Dendritic cell treated with granulocyte-macrophage colony-stimulating factor and Interleukin-4, amounts not matched to agents 40 ng/mL and 50 ng/mL, for 4 days (primary cell): ENCODE measurements at regions of chr1 and their contacts with region 1.

Region 1: GRCh38 chr1:32335790-32336590 is at the start of gene MARCKSL1:
- H3K4me3 Mint-ChIP-seq: peak within 1 kb of the TSS; percentile 73
- H3K27ac Mint-ChIP-seq: peak within 1 kb of the TSS; percentile 80
- H3K4me1 Mint-ChIP-seq: peaks cover 64% of the 10 kb centered on the region
- H3K27me3 Mint-ChIP-seq: peaks cover 5% of the 10 kb centered on the region

Region 2: GRCh38 chr1:32223683-32224082 is 112.3 kb before region 1 on chr1:
- intact Hi-C with region 1: no loop called
- H3K4me3 Mint-ChIP-seq: no peak overlapping the region
- H3K27ac Mint-ChIP-seq: peak overlapping the region; percentile 95
- H3K4me1 Mint-ChIP-seq: peaks cover 35% of the 10 kb centered on the region
- H3K27me3 Mint-ChIP-seq: no peaks in the 10 kb centered on the region

Region 3: DNA sequence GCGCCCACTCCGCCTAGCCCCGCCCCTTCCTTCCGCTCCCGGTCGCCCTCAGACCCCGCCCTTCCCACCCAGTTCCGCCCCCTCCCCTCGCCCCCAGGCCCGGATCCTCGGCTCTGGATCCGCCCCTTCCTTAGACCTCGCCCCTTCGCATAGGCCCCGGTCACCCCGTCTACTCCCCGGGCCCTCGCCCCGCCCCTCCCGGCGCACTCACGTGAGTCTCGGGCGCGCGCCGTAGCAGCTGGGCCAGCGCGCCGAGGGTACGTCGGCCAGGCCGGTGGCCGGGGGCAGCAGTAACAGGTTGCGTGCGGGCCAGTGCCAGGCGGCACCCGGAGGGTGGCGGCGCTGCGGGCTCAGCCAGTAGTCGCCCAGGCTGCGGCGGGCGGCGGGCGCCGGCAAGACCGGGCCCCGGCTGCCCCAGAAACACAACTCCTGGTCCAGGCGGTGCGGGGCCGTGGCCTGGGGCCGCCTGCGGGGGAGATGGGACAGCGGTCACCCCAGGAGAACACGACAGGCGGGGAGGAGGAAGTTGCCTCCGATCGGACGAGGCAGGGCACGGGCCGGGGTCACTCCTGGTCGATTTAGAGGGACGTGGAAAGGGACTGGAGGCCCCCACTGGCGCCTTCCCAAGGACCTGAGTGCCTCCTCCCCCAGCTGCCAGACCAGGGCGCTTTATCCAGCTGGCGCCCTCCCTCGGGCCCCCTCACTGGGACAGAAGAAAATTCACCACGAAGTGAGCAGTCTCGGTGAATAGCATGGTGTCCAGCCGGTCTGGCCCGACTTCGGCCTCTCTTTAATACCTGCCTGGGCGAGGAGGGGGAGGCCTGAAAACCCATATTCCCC is 15.6 kb after region 1 on chr1:
- intact Hi-C with region 1: loop called (anchors 1 kb)
- H3K4me3 Mint-ChIP-seq: peak overlapping the region; percentile 73
- H3K27ac Mint-ChIP-seq: peak overlapping the region; percentile 79
- H3K4me1 Mint-ChIP-seq: peaks cover 62% of the 10 kb centered on the region
- H3K27me3 Mint-ChIP-seq: peaks cover 26% of the 10 kb centered on the region

Region 4: DNA sequence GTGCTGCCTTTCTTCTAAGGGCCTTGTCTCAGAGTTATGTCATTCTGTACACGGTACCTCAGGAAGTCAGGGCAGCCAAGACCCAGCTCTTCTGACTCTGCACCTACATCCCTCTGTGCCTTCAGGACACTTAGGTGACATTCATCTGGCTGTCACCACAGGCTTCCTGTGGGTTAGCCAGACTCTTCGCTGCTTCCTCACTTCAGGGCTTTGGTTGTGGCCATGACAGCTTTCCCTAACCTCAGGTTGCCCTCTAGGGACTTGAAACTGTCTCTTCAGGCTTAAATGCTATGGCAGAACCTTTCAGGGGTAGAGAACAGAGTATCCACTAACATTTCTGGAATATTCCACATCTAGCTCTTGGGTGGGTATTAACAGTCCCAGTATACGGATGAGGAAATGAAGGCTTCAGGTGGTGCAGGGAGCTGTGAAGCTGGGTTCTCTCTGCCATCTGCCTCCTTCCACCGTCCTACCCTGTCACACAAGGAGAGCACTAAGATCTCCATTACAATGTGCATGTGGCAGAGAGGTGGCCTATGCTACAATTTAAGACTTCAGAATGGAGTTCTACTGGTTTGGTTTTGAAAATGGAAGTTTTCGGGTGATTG is 36.3 kb after region 1 on chr1:
- intact Hi-C with region 1: loop called (anchors 1 kb)
- H3K4me3 Mint-ChIP-seq: no peak overlapping the region
- H3K27ac Mint-ChIP-seq: no peak overlapping the region
- H3K4me1 Mint-ChIP-seq: peaks cover 9% of the 10 kb centered on the region
- H3K27me3 Mint-ChIP-seq: no peaks in the 10 kb centered on the region